HEK293T (cell line): ENCODE measurements at regions of chr18 and their contacts with region 1.

Region 1: GRCh38 chr18:23442655-23443357 is 10.3 kb upstream of the RIOK3 start:
- DNase-seq: no peak

Region 2: GRCh38 chr18:23452728-23453679 is 10.2 kb after region 1 on chr18 and contains the start of gene RIOK3:
- CTCF ChIA-PET with region 1: no interaction called
- POLR2A ChIA-PET with region 1: interaction called, 17 read pairs
- DNase-seq: peak; percentile 99